ENCODE measurements at regions of chr9 and their contacts with region 1.

Region 1: DNA sequence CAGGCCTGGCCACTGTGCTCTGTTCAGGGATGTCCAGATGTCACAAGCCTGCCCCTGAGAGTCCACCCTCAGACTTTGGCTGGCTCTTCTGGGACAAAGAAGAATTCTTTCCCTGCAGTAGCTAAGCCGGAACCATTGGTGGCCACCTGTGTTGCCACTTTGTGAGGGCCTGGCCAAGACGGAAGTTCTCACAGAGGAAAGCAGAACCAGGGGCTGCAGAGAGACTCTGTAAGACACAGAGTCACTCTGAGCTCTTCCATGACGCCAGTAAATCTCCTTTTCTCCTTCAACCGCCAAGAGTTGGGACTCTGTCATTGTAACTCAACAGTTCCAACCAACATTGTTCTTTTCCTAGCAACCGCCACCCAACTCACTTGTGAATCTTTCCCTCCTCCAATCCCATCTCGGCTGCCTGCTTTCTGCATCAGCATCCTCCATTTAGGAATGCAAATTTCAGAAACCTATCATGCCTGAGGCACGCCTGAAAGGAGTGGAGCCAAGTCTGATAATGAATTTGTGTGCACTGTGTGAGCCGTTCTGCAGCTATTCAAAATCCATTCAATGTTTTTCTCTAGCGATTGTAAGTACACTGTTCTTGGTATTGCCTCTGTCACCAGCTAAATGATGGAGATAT is 37.8 kb upstream of the ATP6V1G1 start:
- DNase-seq: no peak
- H3K4me3 ChIP-seq: no peak overlapping the region
- H3K27ac ChIP-seq: no peak overlapping the region
- H3K4me1 ChIP-seq: no peaks in the 10 kb centered on the region
- H3K27me3 ChIP-seq: no peaks in the 10 kb centered on the region
- CTCF ChIP-seq: no peak
- EP300 ChIP-seq: no peak
- POLR2A ChIP-seq: no peak

Region 2: DNA sequence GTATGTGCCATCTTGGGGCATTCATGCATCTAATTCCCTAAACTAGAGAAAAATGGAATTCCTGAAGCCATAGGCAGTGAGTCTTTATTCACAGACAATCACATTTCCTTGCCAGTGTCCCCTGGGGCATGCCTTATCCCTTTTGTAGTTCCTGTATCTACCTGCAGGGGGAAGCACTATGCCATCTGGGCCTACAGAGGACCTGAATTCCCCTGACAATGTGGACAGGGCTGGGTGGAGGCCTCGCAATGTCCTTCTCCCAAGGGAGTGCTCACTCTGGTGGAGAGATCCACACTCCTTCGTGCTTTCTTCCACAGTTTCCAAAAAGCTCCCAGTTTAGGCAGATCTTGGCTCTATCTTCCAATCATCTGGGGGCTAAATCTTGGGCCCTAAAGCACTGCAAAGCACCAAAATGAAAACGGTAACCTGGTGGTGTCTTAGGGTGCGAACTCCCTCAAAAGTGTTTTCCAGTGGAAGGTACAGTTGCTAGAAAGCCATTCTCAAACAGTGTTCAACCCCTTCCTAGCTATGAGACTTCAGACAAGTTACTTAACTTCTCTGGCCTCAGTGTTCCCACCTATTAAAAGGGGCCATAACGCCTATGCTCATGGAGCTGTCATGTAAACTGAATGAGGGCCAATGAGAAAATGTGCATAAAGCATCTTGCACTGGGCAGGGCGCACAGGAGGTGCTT is 62.1 kb before region 1 on chr9:
- intact Hi-C with region 1: loop called in 1 of 4 experiments (anchors 10 kb)
- DNase-seq: peak in 3 of 5 donors; percentile 32 to 60 (median 39)
- H3K4me3 ChIP-seq: no peak overlapping the region
- H3K27ac ChIP-seq: no peak overlapping the region
- H3K4me1 ChIP-seq: peaks cover 2% of the 10 kb centered on the region
- H3K27me3 ChIP-seq: no peaks in the 10 kb centered on the region
- CTCF ChIP-seq: peak in 2 of 3 donors; percentile 60 to 62
- EP300 ChIP-seq: no peak
- POLR2A ChIP-seq: no peak

Region 3: DNA sequence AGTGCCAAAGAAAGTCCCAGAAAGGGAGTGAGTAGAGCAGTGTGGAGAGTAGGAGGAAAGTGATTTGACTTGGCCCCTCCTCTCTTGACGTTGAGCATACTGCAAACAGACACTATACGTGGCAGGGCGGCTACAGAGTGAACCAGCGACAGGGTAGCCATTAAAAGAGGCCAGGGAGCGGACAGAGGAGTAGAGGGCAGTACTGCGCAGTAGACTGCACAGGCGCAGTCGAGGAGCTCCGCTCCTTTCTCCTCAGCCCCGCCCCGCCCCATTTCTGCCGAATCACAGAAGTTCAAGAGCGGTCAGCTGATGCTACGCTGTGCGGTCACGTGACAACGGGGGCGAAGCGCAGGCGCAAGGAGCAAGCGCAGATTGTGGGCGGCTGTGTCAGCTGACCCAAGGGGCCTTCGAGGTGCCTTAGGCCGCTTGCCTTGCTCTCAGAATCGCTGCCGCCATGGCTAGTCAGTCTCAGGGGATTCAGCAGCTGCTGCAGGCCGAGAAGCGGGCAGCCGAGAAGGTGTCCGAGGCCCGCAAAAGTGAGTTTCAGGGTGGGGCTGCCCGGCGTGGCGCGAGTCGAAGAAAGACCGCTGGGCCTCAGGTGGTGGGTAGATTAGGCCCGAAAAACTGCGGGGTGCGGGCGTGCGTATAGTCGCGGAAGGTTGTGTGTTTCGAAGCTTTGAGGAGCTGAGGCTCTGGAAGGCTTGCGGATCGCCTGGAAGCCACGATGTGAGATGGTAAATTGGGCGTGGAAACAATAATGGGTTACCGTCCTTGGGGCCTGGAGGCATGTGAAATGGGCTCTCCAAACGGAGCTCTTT is 37.8 kb after region 1 on chr9 and contains the start of gene ATP6V1G1:
- intact Hi-C with region 1: no loop called
- DNase-seq: peak; percentile 99 to 100 (median 100)
- H3K4me3 ChIP-seq: peak within 1 kb of the TSS; percentile 94
- H3K27ac ChIP-seq: peak within 1 kb of the TSS; percentile 73 to 76
- H3K4me1 ChIP-seq: peaks cover 13% of the 10 kb centered on the region
- H3K27me3 ChIP-seq: no peaks in the 10 kb centered on the region
- CTCF ChIP-seq: peak in 2 of 3 donors; percentile 11 to 27
- EP300 ChIP-seq: no peak
- POLR2A ChIP-seq: peak; percentile 95
- total RNA-seq, gene ATP6V1G1: 93.5 to 211 (median 106) TPM

Measured in ovary (tissue), 10 donors.